Right ventricle myocardium superior (tissue), 1 donor: ENCODE measurements at regions of chr7 and their contacts with region 1.

Region 1: GRCh38 chr7:143321734-143322133 is 5.8 kb downstream of the CLCN1 start:
- DNase-seq: peak; percentile 47
- ATAC-seq: peak; percentile 38

Region 2: GRCh38 chr7:142739923-142740492 is 581.7 kb before region 1 on chr7:
- intact Hi-C with region 1: no loop called
- DNase-seq: no peak
- ATAC-seq: no peak

Region 3: GRCh38 chr7:143416565-143417149 is 94.9 kb after region 1 on chr7:
- intact Hi-C with region 1: loop called (anchors 10 kb)
- DNase-seq: no peak
- ATAC-seq: peak; percentile 57

Region 4: GRCh38 chr7:143490717-143491306 is 169.1 kb after region 1 on chr7:
- intact Hi-C with region 1: no loop called
- DNase-seq: no peak
- ATAC-seq: peak; percentile 61